ENCODE measurements at regions of chr11 and their contacts with region 1.

Region 1: GRCh38 chr11:119481021-119481666 is 58.2 kb upstream of the THY1 start:
- DNase-seq: peak; percentile 90
- H3K4me3 ChIP-seq: no peak overlapping the region
- H3K27ac ChIP-seq: no peak overlapping the region
- H3K4me1 ChIP-seq: peaks cover 4% of the 10 kb centered on the region
- H3K27me3 ChIP-seq: no peaks in the 10 kb centered on the region
- CTCF ChIP-seq: peak; percentile 96 to 98 (median 97)
- POLR2A ChIP-seq: no peak

Region 2: GRCh38 chr11:119334174-119334930 is 146.8 kb before region 1 on chr11 and contains the start of gene RNF26:
- intact Hi-C with region 1: no loop called
- DNase-seq: peak; percentile 99
- H3K4me3 ChIP-seq: peak within 1 kb of the TSS; percentile 70 to 95
- H3K27ac ChIP-seq: peak within 1 kb of the TSS; percentile 60 to 92
- H3K4me1 ChIP-seq: peaks cover 17% of the 10 kb centered on the region
- H3K27me3 ChIP-seq: no peaks in the 10 kb centered on the region
- CTCF ChIP-seq: no peak
- POLR2A ChIP-seq: peak; percentile 48
- total RNA-seq, gene RNF26: 28.2 to 31.0 TPM

Region 3: DNA sequence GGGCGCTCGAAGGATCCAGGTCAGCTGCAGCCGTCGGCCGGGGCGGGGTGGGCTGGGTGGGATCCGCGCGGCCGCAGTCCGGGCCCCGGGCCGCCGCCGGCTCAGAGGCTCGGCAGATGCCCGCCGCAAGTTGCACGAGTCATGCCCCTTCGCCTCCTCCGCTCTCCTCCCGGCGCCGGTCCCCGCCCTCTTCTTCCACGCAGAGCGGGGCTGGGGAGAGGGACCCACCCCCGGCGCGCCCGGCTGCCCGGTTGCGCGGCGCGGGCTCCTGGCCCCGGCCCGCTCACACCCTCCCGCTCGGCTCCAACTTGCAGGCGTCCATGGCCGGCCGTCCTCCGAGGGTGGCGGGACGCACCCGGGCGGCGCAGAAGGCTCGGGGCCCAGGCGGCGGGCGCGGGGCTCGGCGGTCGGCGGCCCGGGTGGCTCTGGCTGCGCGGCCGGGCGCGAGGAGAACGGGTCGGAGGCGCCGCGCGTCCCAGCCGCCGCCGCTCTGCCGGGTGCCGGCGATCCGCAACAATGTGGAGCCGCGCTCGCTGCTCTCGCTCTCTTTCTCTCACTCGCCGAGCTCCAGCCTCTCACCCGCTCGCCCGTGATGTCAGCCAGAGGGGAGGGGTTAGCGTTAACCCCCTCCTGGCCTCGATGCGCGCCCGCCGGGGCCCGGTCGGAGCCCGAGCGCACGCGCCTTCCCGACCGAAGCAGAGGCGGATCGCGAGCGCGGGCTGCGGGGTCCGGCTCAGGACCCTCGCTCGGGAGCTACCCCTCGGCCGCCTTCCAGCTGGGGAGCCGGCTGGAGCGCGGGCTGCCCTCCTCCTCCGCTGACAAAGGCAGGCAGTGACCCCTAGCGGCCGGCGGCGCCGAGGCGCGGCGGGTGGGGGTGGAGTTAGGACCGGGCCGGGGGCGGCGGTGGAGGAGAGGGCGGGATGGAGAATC is 247.8 kb after region 1 on chr11 and contains the start of gene NECTIN1:
- intact Hi-C with region 1: loop called (anchors 5 kb)
- DNase-seq: peak; percentile 88
- H3K4me3 ChIP-seq: peak within 1 kb of the TSS; percentile 62 to 81
- H3K27ac ChIP-seq: peak within 1 kb of the TSS; percentile 59 to 86
- H3K4me1 ChIP-seq: peaks cover 21% of the 10 kb centered on the region
- H3K27me3 ChIP-seq: no peaks in the 10 kb centered on the region
- CTCF ChIP-seq: peak; percentile 81 to 96 (median 84)
- POLR2A ChIP-seq: no peak
- total RNA-seq, gene NECTIN1: 5.2 TPM

Region 4: DNA sequence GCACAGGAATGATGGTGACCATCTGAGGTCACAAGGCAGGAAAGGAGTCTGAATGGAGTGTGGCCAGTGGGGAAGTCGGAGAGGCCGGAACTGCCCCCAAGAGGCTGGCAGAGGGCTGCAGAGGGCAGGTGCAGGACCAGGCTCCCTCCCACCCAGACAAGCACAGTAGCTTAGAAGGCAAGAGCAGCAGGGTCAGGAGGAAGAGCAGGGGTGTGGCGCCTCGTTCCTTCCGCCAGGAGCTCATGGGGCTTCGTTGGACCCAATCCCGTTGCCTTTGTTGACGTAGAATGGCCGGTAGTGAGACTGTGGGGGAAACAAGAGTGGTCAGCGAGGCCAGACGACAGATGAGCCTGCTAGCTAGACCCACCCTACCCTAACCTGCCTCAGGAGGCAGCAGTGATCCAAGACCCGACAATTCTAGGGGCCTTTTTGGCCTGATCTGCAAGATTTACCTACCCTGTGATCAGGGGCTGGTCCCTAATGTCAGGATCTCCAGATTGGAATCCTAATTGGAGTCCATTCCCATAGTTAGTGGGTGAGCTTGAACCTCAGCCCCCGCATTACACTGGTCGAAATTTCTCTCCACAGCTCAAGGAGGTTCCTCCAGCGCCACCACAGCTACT is 631.1 kb after region 1 on chr11:
- intact Hi-C with region 1: loop called (anchors 10 kb)
- DNase-seq: no peak
- H3K4me3 ChIP-seq: no peak overlapping the region
- H3K27ac ChIP-seq: no peak overlapping the region
- H3K4me1 ChIP-seq: no peaks in the 10 kb centered on the region
- H3K27me3 ChIP-seq: no peaks in the 10 kb centered on the region
- CTCF ChIP-seq: no peak
- POLR2A ChIP-seq: no peak

Measured in testis (tissue), 5 donors.